Esophagus squamous epithelium (tissue), 5 donors: ENCODE measurements at regions of chr4 and their contacts with region 1.

Region 1: DNA sequence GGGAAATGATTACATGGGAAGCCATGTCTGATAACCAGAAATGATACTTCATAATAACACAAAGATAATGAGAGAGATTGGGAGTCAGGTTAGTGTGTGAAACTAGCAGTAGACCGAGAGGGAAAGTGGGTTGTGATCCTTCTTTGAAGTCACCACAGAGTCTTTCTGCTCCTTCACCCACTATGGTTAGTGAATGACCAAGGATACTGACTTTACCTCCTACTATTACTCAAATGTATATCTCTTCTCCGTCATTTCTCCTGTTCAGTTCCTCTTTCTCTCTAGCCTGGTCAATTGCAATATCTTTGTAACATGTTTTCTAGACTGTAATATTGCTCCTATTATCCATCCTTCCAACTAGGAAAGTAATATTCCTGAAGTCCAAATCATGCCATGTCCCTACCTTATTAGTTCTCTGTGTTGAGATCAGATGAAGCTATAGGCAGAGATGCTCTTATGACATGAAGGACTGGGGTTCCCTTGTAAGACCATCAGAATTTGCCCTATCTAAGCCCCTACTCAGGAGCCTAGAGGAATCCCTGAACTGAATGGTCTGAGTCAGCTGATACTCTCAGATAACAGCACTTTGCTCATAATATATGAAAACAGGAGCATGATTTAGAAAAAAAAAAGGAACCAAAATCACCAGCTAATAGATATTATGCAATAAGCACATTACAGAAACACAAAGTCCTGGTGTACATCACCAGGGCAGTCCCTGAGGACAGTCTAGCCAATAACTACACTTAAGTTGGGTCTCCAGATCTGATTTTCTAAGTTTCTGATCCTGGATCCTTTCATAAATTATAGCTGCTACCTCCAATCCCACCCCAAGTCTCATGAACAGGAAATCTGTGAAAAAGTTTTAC is 81.2 kb downstream of the SHROOM3 start:
- DNase-seq: no peak
- H3K4me3 ChIP-seq: no peak overlapping the region
- H3K27ac ChIP-seq: no peak overlapping the region
- H3K4me1 ChIP-seq: no peaks in the 10 kb centered on the region
- H3K27me3 ChIP-seq: no peaks in the 10 kb centered on the region
- CTCF ChIP-seq: no peak
- POLR2A ChIP-seq: no peak

Region 2: GRCh38 chr4:76738086-76738931 is 222.1 kb after region 1 on chr4:
- intact Hi-C with region 1: loop called (anchors 10 kb)
- DNase-seq: no peak
- H3K4me3 ChIP-seq: peak overlapping the region in 2 of 4 donors; percentile 0 to 25
- H3K27ac ChIP-seq: peak overlapping the region; percentile 62 to 88 (median 83)
- H3K4me1 ChIP-seq: peaks cover 0 to 23% (median 0%) of the 10 kb centered on the region in 3 donors
- H3K27me3 ChIP-seq: no peaks in the 10 kb centered on the region
- CTCF ChIP-seq: no peak
- POLR2A ChIP-seq: peak in 2 of 4 donors; percentile 15 to 51

Region 3: GRCh38 chr4:77044461-77045150 is 528.4 kb after region 1 on chr4:
- intact Hi-C with region 1: loop called (anchors 10 kb)
- DNase-seq: no peak
- H3K4me3 ChIP-seq: no peak overlapping the region
- H3K27ac ChIP-seq: peak overlapping the region in 2 of 4 donors; percentile 4 to 41
- H3K4me1 ChIP-seq: peaks cover 0 to 27% (median 0%) of the 10 kb centered on the region in 3 donors
- H3K27me3 ChIP-seq: no peaks in the 10 kb centered on the region
- CTCF ChIP-seq: peak in 4 of 6 experiments; percentile 55 to 71 (median 59)
- POLR2A ChIP-seq: no peak